Gastrocnemius medialis (tissue), 4 donors: ENCODE measurements at regions of chr11 and their contacts with region 1.

Region 1: DNA sequence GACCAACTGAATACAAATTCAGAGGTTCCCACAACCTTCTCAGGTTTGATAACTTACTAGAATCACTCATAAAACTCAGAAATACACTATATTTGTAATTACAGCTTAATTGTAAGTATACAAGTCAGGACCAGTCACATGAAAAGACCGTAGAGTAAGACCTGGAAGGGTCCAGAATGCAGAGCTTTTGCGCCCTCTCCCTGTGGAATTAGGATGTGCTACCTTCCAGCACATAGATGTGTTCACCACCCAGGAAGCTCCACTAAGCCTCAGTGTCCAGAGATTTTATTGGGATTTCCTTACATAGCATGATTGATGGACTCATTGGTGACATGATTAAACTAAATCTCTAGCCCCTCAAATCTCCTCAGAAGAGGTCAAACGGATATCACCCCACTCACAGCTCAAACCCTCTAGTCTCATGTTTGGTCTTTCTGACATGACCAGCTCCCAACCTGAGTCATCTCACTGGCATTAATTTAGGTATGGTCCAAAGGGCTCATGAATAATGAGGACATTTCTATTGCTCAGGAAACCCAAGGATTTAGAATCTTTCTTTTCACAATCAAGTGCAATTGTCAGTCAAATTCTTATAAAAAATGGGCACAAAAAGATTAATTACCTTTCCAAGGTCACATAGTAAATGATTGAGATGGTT is 77.2 kb upstream of the UBASH3B start:
- DNase-seq: no peak
- ATAC-seq: no peak
- H3K4me3 ChIP-seq: no peak overlapping the region
- H3K27ac ChIP-seq: no peak overlapping the region
- H3K4me1 ChIP-seq: peaks cover 0 to 3% of the 10 kb centered on the region in 2 donors
- H3K27me3 ChIP-seq: no peaks in the 10 kb centered on the region
- CTCF ChIP-seq: no peak
- POLR2A ChIP-seq: no peak

Region 2: DNA sequence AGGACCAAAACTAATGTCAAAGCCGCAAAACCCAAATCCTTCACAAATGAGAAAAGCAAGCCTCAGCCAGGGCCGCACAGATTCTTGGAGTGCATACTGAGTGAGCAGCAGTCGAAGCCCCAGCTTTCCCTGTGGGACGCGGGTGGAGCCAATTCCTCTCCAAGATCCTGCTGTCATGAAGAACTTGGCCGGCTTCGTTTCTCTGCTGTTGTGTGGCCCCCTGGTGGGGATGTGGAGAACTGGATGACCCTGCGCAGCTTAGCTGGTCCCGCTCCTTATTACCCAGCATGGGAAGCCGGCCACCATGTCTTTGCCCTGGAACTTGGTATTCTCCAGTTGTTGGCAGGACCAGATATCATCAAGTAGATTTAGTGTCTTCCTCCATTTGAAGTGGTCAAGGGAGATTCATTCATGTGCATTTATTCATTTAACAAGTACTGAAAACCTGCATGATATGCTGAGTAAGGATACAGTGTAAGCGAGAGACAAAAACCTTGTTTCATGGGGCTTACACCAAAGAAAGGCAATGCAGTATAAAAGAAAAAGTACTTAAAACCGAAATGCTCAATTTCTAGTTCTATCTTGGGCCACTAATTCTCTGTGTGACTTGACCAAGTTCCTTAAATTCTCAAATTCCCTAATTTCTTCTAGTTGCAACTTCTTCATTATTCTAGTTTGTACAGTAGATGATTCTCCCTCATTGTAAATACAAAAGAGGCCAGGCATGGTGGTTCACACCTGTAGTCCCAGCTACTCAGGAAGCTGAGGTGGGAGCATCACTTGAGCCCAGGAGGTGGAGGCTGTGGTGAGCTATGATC is 203.3 kb after region 1 on chr11:
- in situ Hi-C with region 1: no loop called
- intact Hi-C with region 1: loop called (anchors 1 kb)
- DNase-seq: peak; percentile 75 to 76
- ATAC-seq: peak; percentile 77 to 86
- H3K4me3 ChIP-seq: no peak overlapping the region
- H3K27ac ChIP-seq: no peak overlapping the region
- H3K4me1 ChIP-seq: peaks cover 11 to 15% of the 10 kb centered on the region in 2 donors
- H3K27me3 ChIP-seq: no peaks in the 10 kb centered on the region
- CTCF ChIP-seq: peak; percentile 65 to 88 (median 82)
- POLR2A ChIP-seq: no peak

Region 3: DNA sequence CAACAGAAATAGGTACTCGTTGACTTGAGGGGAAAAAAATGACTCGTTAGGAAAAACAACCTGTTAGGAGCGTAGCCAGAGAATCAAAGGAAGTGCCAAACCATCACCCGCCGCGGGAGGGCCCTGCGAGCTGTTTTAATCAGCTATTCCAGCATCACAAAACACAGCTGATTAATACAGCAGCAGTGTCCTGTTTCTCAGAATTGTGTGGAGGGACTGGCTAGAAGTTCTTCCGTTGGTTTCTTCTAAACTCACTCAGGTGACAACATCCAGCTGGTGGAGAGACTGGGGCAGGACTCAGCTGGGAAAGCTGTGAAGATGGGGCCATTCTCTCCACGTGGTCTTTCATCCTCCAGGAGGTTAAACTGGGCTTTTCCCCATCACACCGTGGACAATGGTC is 455.6 kb after region 1 on chr11:
- in situ Hi-C with region 1: loop called in 1 of 4 experiments (anchors 25 kb)
- intact Hi-C with region 1: no loop called
- DNase-seq: no peak
- ATAC-seq: no peak
- H3K4me3 ChIP-seq: no peak overlapping the region
- H3K27ac ChIP-seq: no peak overlapping the region
- H3K4me1 ChIP-seq: no peaks in the 10 kb centered on the region
- H3K27me3 ChIP-seq: no peaks in the 10 kb centered on the region
- CTCF ChIP-seq: no peak
- POLR2A ChIP-seq: no peak